AG04449 (cell line): ENCODE measurements at regions of chr17 and their contacts with region 1.

Region 1: GRCh38 chr17:28763804-28764266 is 20.0 kb downstream of the TRAF4 start:
- DNase-seq: peak; percentile 29
- H3K4me3 ChIP-seq: no peak overlapping the region
- CTCF ChIP-seq: peak; percentile 69

Region 2: DNA sequence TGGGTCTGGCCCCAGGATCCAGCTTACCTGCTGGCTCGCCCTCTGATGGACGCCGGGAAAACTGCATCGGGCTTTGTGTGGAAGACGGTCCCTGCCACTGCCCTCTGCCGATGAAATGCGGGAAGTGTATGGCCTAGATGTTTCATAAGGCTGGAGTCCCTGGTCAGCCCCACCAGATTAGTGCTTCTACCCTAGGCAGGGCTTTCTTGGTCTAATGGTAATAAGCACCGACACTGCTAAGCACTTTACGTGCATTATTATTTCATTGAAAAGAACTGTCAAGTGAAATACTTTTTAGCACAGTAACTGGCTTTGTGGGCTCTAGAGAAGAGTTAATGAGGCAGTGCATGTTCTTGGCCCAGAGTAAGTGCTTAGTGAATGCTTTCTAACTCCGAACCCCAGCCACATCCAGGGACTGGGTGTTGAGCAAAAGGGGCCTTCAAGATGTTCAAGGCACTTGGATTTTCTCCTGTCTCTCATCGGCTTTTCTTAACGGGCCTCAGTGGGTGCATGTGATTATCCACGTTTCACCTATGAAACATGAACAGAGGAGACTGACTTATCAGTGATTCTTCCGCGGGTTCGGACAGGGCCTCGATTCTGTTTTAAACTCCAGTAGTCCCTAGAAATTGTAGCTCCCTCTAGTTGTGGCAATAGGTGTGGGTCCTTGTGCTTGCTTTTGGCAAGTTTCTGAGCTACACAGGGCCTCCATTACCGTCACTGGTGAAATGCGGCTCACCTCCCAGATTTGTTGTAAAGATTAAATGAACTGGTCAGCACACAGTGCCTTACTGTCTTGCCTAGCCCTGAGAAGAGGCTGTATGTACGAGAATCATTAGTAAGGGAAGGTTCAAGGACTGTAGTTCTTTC is 13.4 kb before region 1 on chr17:
- CTCF ChIA-PET with region 1: interaction called, 295 read pairs
- POLR2A ChIA-PET with region 1: interaction called, 5 read pairs
- DNase-seq: no peak
- H3K4me3 ChIP-seq: no peak overlapping the region
- CTCF ChIP-seq: peak; percentile 100

Region 3: DNA sequence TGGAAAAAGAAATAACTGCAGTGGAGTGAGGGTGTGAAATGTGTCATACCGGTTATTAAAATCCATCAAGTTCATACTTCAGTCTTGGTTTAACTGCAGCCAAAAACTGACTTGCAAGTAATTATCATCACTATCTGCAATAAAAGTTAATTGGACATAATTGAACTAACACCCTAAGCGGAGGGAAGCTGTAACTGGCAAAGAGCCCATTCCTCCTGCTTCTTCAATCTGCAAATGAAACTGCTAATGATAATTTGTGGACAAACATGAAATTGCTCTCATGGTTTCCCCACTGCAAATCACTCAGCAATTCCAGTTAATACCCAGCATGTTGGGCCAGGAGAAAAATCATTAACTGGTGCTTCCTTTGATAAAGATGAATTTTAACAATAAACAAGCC is 32.2 kb after region 1 on chr17:
- CTCF ChIA-PET with region 1: interaction called, 47 read pairs
- POLR2A ChIA-PET with region 1: no interaction called
- DNase-seq: no peak
- H3K4me3 ChIP-seq: no peak overlapping the region
- CTCF ChIP-seq: no peak

Region 4: DNA sequence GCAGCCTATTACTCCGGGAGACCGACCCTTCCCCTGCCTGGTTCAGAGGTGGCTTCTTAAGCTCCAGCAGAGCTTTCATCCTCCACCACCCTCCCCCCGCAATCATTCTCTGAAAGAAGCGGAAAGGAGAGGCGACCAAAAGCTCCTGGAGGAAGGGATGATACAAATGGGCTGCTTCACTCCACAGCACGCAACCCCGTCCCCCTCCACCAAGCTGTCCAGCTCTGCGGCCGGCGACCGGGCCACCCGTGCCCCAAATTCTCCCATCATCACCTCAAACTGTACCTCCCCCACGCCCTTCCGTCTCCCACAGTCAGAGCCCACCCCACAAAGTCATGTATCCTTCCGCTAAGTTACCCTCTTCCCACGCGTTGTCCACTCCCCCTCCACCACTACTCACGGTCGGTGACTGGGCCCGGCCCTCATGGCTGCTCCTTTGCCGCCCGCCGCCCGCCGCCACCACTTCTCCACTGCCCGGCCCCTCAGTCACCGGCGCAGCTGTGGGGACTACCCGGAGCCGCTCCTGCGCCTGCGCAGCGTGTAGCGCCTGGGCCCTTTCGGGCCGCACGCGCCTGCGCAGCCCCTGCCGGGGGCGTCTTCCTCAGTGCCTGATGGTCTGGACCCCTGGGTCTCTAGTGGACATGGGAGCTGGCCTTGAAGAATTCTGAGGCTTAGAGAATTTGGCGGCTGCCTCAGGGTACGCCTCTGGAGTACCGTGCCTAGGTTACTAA is 78.6 kb after region 1 on chr17 and contains the start of gene FAM222B:
- CTCF ChIA-PET with region 1: interaction called, 26 read pairs
- POLR2A ChIA-PET with region 1: no interaction called
- DNase-seq: no peak
- H3K4me3 ChIP-seq: peak within 1 kb of the TSS; percentile 94
- CTCF ChIP-seq: peak; percentile 6

Region 5: GRCh38 chr17:28902819-28903545 is 139.1 kb after region 1 on chr17 and contains the start of gene DHRS13:
- CTCF ChIA-PET with region 1: interaction called, 90 read pairs
- POLR2A ChIA-PET with region 1: no interaction called
- DNase-seq: no peak
- H3K4me3 ChIP-seq: peak within 1 kb of the TSS; percentile 65
- CTCF ChIP-seq: peak; percentile 71

Region 6: DNA sequence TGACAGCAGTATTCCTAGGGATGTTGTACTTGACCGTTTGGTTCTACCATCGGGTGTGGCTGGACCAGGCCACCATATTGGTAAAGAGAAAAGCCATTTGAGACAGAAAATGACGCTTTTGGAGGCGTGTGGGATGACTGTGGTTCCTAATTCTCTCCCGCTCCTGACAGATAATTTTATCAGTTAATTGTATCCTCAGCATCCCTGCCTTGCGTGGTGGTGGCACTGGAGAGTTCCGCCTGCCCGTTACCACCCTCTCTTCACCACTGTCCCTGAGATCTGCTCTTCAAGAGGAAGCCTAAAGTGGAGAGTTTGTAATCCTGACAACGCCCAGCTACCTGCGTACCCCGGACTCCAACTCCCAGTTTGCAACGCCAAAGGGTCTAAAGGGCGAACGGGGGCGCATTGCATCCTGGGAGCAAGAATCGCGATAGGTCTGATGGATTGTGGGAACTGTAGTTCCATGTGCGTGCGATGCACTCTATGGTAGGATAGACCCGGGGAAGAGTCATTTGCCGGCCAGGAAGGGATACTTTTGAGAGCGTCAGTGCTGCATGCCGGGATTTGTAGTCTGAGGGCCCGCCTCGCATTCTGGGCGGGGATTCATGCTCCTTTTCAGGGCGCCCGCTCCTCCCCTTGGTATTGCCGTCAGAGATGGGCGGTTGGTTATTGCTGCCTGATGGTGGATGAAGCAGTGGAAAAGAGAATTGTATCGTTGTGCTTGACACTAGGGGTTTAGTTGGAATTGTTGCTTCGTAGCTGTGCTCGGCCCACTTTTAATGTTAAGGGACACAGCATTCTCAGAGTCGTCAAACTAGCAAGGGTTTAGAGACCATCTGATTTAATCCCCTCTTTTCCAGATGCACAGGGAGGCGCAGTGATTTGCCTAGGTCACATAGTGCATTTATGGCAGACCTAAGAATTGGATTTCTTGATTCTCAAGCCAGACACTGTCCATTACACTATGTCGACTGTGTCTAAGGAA is 188.4 kb after region 1 on chr17:
- CTCF ChIA-PET with region 1: interaction called, 83 read pairs
- POLR2A ChIA-PET with region 1: no interaction called
- DNase-seq: peak; percentile 96
- H3K4me3 ChIP-seq: peak overlapping the region; percentile 76
- CTCF ChIP-seq: no peak